Heart left ventricle (tissue), 16 donors: ENCODE measurements at regions of chr5 and their contacts with region 1.

Region 1: GRCh38 chr5:180090098-180090768 is 18.7 kb upstream of the RNF130 start:
- DNase-seq: peak; percentile 70 to 86 (median 77)
- ATAC-seq: peak; percentile 62 to 94 (median 88)
- H3K4me3 ChIP-seq: peak overlapping the region; percentile 6 to 79 (median 58)
- H3K27ac ChIP-seq: peak overlapping the region in 10 of 12 donors; percentile 12 to 85 (median 54)
- H3K4me1 ChIP-seq: peaks cover 0 to 24% (median 5%) of the 10 kb centered on the region in 12 donors
- H3K27me3 ChIP-seq: no peaks in the 10 kb centered on the region
- CTCF ChIP-seq: peak in 11 of 12 donors; percentile 83 to 98 (median 94)
- POLR2A ChIP-seq: no peak

Region 2: DNA sequence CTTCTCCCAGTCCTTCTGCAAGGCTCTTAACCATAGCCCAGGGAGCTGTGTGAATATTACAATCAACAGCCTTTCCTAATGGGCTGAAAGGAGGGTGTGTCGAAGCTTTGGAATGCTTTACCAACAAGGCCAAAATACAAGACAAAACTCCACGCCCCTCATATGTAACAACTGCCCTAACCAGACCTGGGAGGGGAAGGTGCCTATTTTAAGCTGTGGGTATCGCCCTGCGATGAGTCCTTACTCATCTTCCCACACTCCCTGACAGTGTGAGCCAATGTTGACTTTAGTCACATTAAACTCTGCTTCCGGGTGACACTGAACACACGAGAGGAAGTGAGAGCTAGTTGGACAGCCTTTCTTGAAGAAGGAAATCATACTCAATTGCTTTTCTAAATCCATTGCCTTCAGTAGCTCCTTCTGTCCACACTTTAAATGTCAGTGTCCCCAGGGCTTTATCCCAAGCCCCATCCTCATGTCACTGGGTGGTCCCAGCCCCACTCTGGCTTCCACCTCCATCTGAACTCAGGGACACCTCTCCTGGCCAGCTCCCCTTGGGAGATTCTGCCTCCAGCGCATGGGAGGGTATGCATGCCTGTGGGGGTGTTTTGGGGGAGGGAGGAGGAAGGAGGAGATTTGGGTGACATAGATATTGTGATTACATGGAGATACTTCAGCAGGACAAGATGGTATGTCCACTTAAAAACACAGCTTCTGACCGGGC is 176.0 kb before region 1 on chr5:
- intact Hi-C with region 1: loop called in 4 of 10 experiments (anchors 5 to 10 kb)
- DNase-seq: no peak
- ATAC-seq: peak in 3 of 4 donors; percentile 39 to 64 (median 58)
- H3K4me3 ChIP-seq: no peak overlapping the region
- H3K27ac ChIP-seq: peak overlapping the region in 1 of 12 donors; percentile 49
- H3K4me1 ChIP-seq: peaks cover 0 to 15% (median 0%) of the 10 kb centered on the region in 12 donors
- H3K27me3 ChIP-seq: no peaks in the 10 kb centered on the region
- CTCF ChIP-seq: no peak
- POLR2A ChIP-seq: no peak

Region 3: GRCh38 chr5:179986328-179986727 is 103.9 kb before region 1 on chr5:
- intact Hi-C with region 1: loop called in 9 of 10 experiments (anchors 1 to 5 kb)
- DNase-seq: no peak
- ATAC-seq: peak; percentile 64 to 91 (median 76)
- H3K4me3 ChIP-seq: no peak overlapping the region
- H3K27ac ChIP-seq: no peak overlapping the region
- H3K4me1 ChIP-seq: no peaks in the 10 kb centered on the region
- H3K27me3 ChIP-seq: no peaks in the 10 kb centered on the region
- CTCF ChIP-seq: peak in 8 of 12 donors; percentile 6 to 49 (median 40)
- POLR2A ChIP-seq: no peak